WTC11 (cell line): ENCODE measurements at regions of chr7 and their contacts with region 1.

Region 1: DNA sequence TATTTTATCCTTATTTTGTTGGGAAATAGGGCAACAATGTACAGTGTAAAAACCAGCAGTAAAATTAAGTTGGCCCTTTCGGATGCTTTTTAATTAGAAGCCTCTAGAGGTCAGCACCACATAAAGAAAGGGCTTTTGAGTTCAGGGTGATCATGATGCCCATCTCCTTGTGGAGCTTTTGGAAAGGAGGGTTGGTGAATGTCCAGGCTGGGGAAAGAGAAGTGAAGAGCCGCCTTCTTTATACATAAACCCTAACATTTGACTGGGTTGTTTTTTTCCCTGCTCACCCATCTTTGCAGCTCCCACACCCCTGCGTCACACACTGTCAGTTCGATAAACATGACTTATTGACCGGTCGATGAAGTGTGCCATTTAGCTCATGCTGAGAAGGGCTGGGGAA is 29.8 kb downstream of the MTURN start:
- DNase-seq: no peak
- ATAC-seq: peak; percentile 43
- H3K4me3 Mint-ChIP-seq: no peak overlapping the region
- H3K27ac Mint-ChIP-seq: no peak overlapping the region; the same call in 1 of the 2 replicates
- H3K4me1 Mint-ChIP-seq: peaks cover 75% of the 10 kb centered on the region
- H3K27me3 Mint-ChIP-seq: peaks cover 18% of the 10 kb centered on the region
- CTCF ChIP-seq: no peak

Region 2: GRCh38 chr7:30119890-30120577 is 44.5 kb before region 1 on chr7:
- CTCF ChIA-PET with region 1: no interaction called
- POLR2A ChIA-PET with region 1: no interaction called
- DNase-seq: no peak
- ATAC-seq: no peak
- H3K4me3 Mint-ChIP-seq: no peak overlapping the region
- H3K27ac Mint-ChIP-seq: no peak overlapping the region
- H3K4me1 Mint-ChIP-seq: no peaks in the 10 kb centered on the region
- H3K27me3 Mint-ChIP-seq: no peaks in the 10 kb centered on the region
- CTCF ChIP-seq: no peak

Region 3: GRCh38 chr7:30268586-30268985 is 104.0 kb after region 1 on chr7:
- CTCF ChIA-PET with region 1: interaction called, 11 read pairs
- POLR2A ChIA-PET with region 1: interaction called, 5 read pairs
- DNase-seq: no peak
- ATAC-seq: no peak
- H3K4me3 Mint-ChIP-seq: no peak overlapping the region
- H3K27ac Mint-ChIP-seq: no peak overlapping the region
- H3K4me1 Mint-ChIP-seq: peaks cover 1% of the 10 kb centered on the region; the same call in 1 of the 2 replicates
- H3K27me3 Mint-ChIP-seq: no peaks in the 10 kb centered on the region
- CTCF ChIP-seq: no peak

Region 4: GRCh38 chr7:30276203-30276900 is 111.8 kb after region 1 on chr7:
- CTCF ChIA-PET with region 1: interaction called, 27 read pairs
- POLR2A ChIA-PET with region 1: no interaction called
- DNase-seq: peak; percentile 60
- ATAC-seq: peak; percentile 97
- H3K4me3 Mint-ChIP-seq: no peak overlapping the region
- H3K27ac Mint-ChIP-seq: no peak overlapping the region
- H3K4me1 Mint-ChIP-seq: peaks cover 11% of the 10 kb centered on the region
- H3K27me3 Mint-ChIP-seq: no peaks in the 10 kb centered on the region
- CTCF ChIP-seq: peak; percentile 35; the same call in 1 of the 2 replicates

Region 5: DNA sequence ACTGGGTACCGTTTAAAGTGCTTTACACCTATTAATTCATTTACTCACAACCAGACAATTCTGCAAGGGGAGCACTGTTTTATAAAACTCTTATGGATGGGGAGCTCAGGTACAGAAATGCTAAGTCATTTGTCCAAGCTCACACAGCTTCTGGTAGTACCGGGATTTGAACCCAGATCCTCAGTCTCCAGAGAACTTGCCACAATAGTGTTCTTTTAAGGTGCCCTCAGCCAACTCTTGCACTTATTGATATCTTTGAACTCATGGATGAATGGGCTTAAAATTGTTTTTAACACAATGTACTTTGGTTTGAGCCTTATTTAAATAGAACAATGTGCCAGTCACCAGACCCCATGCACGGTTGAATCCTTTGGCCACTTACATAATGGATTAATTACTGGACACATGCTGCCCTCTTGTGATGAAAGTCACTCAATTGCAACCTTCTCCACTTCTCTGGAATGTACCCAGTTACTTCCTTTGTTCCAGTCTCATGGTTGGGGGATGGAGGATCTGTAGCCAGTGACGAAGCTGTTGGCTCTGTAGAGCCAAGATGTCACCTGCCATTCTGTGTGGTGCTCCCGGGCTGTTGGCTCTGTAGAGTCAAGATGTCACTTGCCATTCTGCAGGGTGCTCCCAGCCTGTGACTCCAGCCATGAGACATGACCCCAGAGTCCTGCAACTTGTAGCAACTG is 248.4 kb after region 1 on chr7:
- CTCF ChIA-PET with region 1: interaction called, 10 read pairs
- POLR2A ChIA-PET with region 1: no interaction called
- DNase-seq: no peak
- ATAC-seq: peak; percentile 98
- H3K4me3 Mint-ChIP-seq: no peak overlapping the region
- H3K27ac Mint-ChIP-seq: 0 out of 2 replicates have a peak overlapping the region, but pooled peaks have one; percentile 51
- H3K4me1 Mint-ChIP-seq: peaks cover 2% of the 10 kb centered on the region; the same call in 1 of the 2 replicates
- H3K27me3 Mint-ChIP-seq: peaks cover 3% of the 10 kb centered on the region
- CTCF ChIP-seq: no peak